SK-N-SH (cell line): ENCODE measurements at regions of chr16 and their contacts with region 1.

Region 1: DNA sequence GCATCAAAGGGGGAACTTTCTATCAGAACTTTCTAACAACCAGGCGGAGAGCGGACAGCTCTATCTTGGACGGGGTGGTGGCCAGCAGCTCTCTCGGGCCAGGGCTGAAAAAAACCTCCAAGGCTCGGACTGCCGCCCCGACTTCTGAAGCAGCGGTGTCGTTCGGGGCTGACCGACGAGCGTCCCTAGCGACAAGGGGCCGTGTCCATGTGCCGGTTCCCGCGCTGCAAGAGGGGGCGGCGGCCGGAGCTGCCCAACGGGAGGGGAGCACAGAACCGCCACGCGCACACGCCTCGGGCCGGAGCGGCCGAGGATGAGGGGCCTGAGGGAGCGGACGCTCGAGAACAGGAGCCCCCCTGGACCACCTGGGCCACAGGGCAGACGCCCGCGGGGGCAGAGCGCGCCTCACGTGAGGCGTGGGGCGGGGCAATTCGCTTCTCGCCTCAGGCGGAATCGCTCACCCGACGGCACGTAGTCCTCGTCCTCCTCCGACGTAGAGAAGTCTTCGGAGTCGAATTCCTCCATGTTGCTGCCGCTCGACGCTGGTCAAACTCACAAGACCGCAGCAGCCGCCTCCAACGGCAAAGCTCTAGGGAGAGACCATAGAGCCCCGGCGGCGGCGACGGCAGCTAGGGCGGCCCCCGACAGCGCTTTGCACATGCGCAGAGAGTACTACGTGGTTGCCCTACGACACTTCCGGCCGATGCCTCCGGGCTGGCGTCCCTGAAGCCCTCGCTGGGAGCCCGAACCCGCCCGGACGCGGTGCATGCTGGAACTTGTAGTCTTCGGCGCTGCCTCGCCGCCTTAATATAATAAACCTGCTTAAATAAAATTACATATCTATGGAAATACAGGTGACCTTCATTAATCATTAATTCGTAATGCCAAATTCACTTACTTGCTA is at the start of gene CFDP1:
- DNase-seq: peak; percentile 98
- H3K4me3 ChIP-seq: peak within 1 kb of the TSS; percentile 74 to 92
- H3K27ac ChIP-seq: peak within 1 kb of the TSS; percentile 69 to 85
- H3K4me1 ChIP-seq: peaks cover 0 to 10% of the 10 kb centered on the region in 2 experiments; a peak in 1 of 4 replicates
- H3K27me3 ChIP-seq: no peaks in the 10 kb centered on the region
- CTCF ChIP-seq: no peak
- EP300 ChIP-seq: 0 out of 4 replicates have a peak, but pooled peaks of 1 of the 2 experiments have one; percentile 9
- RAD21 ChIP-seq: no peak; the same call in 1 of the 2 replicates
- polyA plus RNA-seq, gene CFDP1: 37.9 and 46.0 TPM in 2 replicates

Region 2: GRCh38 chr16:75445298-75445697 is 12.2 kb after region 1 on chr16:
- CTCF ChIA-PET with region 1: interaction called, 11 read pairs
- POLR2A ChIA-PET with region 1: interaction called, 3 read pairs
- DNase-seq: no peak
- H3K4me3 ChIP-seq: no peak overlapping the region
- H3K27ac ChIP-seq: no peak overlapping the region
- H3K4me1 ChIP-seq: peaks cover 6 to 13% of the 10 kb centered on the region in 2 experiments; a peak in 3 of 4 replicates
- H3K27me3 ChIP-seq: no peaks in the 10 kb centered on the region
- CTCF ChIP-seq: no peak
- EP300 ChIP-seq: no peak
- RAD21 ChIP-seq: no peak

Region 3: GRCh38 chr16:75514296-75514695 is 81.2 kb after region 1 on chr16:
- CTCF ChIA-PET with region 1: no interaction called
- POLR2A ChIA-PET with region 1: no interaction called
- DNase-seq: no peak
- H3K4me3 ChIP-seq: no peak overlapping the region
- H3K27ac ChIP-seq: no peak overlapping the region
- H3K4me1 ChIP-seq: no peaks in the 10 kb centered on the region; a peak in 1 of 4 replicates
- H3K27me3 ChIP-seq: no peaks in the 10 kb centered on the region
- CTCF ChIP-seq: no peak
- EP300 ChIP-seq: no peak
- RAD21 ChIP-seq: no peak